Colonic mucosa (tissue), 4 donors: ENCODE measurements at regions of chr22 and their contacts with region 1.

Region 1: GRCh38 chr22:36781656-36782627 is 6.0 kb upstream of the IFT27 start:
- DNase-seq: peak; percentile 85
- H3K4me3 ChIP-seq: no peak overlapping the region
- H3K27ac ChIP-seq: no peak overlapping the region
- H3K4me1 ChIP-seq: no peaks in the 10 kb centered on the region
- H3K27me3 ChIP-seq: no peaks in the 10 kb centered on the region
- CTCF ChIP-seq: peak; percentile 93

Region 2: GRCh38 chr22:36840106-36840505 is 58.2 kb after region 1 on chr22:
- intact Hi-C with region 1: no loop called
- DNase-seq: no peak
- H3K4me3 ChIP-seq: no peak overlapping the region
- H3K27ac ChIP-seq: no peak overlapping the region
- H3K4me1 ChIP-seq: no peaks in the 10 kb centered on the region
- H3K27me3 ChIP-seq: no peaks in the 10 kb centered on the region
- CTCF ChIP-seq: no peak

Region 3: GRCh38 chr22:36977947-36978660 is 196.2 kb after region 1 on chr22:
- intact Hi-C with region 1: loop called (anchors 5 kb)
- DNase-seq: peak; percentile 92
- H3K4me3 ChIP-seq: peak overlapping the region; percentile 8
- H3K27ac ChIP-seq: no peak overlapping the region
- H3K4me1 ChIP-seq: no peaks in the 10 kb centered on the region
- H3K27me3 ChIP-seq: no peaks in the 10 kb centered on the region
- CTCF ChIP-seq: peak; percentile 88